Panc1 (cell line): ENCODE measurements at regions of chr1 and their contacts with region 1.

Region 1: GRCh38 chr1:47725992-47726855 is 271.0 kb downstream of the TRABD2B start:
- DNase-seq: peak; percentile 63
- ATAC-seq: peak; percentile 92
- H3K4me3 ChIP-seq: no peak overlapping the region
- H3K27ac ChIP-seq: no peak overlapping the region
- H3K4me1 ChIP-seq: peaks cover 15% of the 10 kb centered on the region; the same call in 1 of the 2 replicates
- H3K27me3 ChIP-seq: peaks cover 8% of the 10 kb centered on the region
- CTCF ChIP-seq: peak; percentile 92

Region 2: GRCh38 chr1:47340227-47340626 is 386.0 kb before region 1 on chr1:
- CTCF ChIA-PET with region 1: interaction called, 11 read pairs
- POLR2A ChIA-PET with region 1: no interaction called
- in situ Hi-C with region 1: no loop called
- intact Hi-C with region 1: no loop called
- DNase-seq: no peak
- ATAC-seq: no peak
- H3K4me3 ChIP-seq: no peak overlapping the region
- H3K27ac ChIP-seq: no peak overlapping the region
- H3K4me1 ChIP-seq: peaks cover 4% of the 10 kb centered on the region; the same call in 1 of the 2 replicates
- H3K27me3 ChIP-seq: no peaks in the 10 kb centered on the region
- CTCF ChIP-seq: no peak

Region 3: GRCh38 chr1:47388891-47389238 is 337.4 kb before region 1 on chr1:
- CTCF ChIA-PET with region 1: interaction called, 26 read pairs
- POLR2A ChIA-PET with region 1: no interaction called
- in situ Hi-C with region 1: no loop called
- intact Hi-C with region 1: loop called (anchors 5 kb)
- DNase-seq: peak; percentile 66
- ATAC-seq: peak; percentile 94
- H3K4me3 ChIP-seq: no peak overlapping the region
- H3K27ac ChIP-seq: no peak overlapping the region
- H3K4me1 ChIP-seq: no peaks in the 10 kb centered on the region; the same call in 1 of the 2 replicates
- H3K27me3 ChIP-seq: no peaks in the 10 kb centered on the region; the same call in 1 of the 2 replicates
- CTCF ChIP-seq: peak; percentile 94

Region 4: GRCh38 chr1:47432071-47433036 is 293.9 kb before region 1 on chr1:
- CTCF ChIA-PET with region 1: interaction called, 58 read pairs
- POLR2A ChIA-PET with region 1: no interaction called
- in situ Hi-C with region 1: no loop called
- intact Hi-C with region 1: loop called (anchors 1 kb)
- DNase-seq: no peak
- ATAC-seq: peak; percentile 76
- H3K4me3 ChIP-seq: no peak overlapping the region
- H3K27ac ChIP-seq: no peak overlapping the region
- H3K4me1 ChIP-seq: peaks cover 26% of the 10 kb centered on the region
- H3K27me3 ChIP-seq: no peaks in the 10 kb centered on the region
- CTCF ChIP-seq: peak; percentile 88

Region 5: DNA sequence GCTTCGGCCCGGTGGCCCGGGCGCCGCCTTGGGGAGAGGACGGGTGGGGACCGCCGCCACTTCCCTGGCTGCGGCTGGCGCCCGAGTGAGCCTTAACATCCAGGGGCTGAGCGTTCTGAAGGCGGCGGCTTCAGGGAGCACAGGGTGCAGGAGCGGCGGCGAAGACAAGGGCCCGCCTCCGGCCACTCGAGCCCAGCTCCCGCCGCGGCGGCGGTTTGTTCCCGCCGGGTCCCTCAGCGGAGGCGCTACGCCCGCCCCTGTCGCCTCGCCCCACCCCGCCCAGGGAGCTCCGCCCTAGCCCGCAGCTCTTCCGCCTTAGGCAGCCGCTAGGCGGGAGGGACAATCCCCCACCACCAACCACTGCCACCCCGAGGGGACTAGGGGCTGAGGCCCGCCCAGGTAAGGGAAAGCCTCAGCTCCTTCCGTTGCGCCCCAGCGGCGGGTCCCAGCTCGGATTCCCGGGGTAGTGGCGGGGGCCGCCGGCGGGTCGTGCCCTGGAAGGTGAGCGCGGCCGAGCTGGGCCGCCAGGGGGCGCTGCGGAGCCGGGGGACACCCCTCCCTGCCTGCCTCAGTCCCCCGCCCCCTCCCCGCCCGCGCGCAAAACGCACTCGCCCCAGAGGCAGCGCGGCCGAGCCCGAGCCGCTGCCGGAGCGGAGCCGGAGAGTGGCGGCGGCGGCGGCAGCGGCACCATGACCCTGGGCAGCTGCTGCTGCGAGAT is 288.6 kb before region 1 on chr1 and contains the start of gene FOXD2:
- CTCF ChIA-PET with region 1: interaction called, 58 read pairs
- POLR2A ChIA-PET with region 1: no interaction called
- in situ Hi-C with region 1: no loop called
- intact Hi-C with region 1: loop called (anchors 1 kb)
- DNase-seq: peak; percentile 57
- ATAC-seq: peak; percentile 93
- H3K4me3 ChIP-seq: peak within 1 kb of the TSS; percentile 63 to 89
- H3K27ac ChIP-seq: peak within 1 kb of the TSS; percentile 83
- H3K4me1 ChIP-seq: peaks cover 26% of the 10 kb centered on the region
- H3K27me3 ChIP-seq: no peaks in the 10 kb centered on the region
- CTCF ChIP-seq: peak; percentile 98
- total RNA-seq, gene FOXD2: 2.2 TPM

Region 6: DNA sequence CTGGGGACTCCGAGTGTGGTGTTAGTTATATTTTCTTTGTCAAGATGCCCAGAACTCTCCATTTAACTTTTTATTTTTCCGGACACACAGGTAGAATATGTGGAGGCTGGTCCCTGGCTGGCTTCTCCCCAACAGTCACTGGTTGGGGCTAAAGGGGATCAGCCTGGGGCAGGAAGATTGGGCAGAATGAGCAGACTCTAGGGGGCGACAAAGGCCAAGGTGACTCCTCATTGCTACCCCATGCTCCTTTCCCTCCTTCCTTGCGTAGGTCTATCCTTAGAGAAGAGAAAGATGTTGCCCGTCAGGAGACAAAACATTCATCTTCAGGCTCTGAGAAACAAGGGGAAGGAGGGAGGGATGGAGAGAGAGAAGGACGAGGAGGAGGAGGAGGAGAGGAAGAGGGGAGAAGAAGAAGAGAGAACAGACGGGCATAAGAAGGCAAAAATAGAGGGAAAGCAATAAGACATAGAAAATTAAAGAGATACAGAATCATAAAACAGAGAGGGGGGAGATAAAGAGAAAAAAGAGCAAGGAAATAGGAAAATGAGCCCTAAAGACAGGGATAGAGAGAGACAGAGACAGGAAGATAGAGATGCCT is 198.5 kb before region 1 on chr1:
- CTCF ChIA-PET with region 1: interaction called, 11 read pairs
- POLR2A ChIA-PET with region 1: no interaction called
- in situ Hi-C with region 1: no loop called
- intact Hi-C with region 1: loop called (anchors 5 kb)
- DNase-seq: no peak
- ATAC-seq: peak; percentile 86
- H3K4me3 ChIP-seq: no peak overlapping the region
- H3K27ac ChIP-seq: no peak overlapping the region
- H3K4me1 ChIP-seq: no peaks in the 10 kb centered on the region
- H3K27me3 ChIP-seq: peaks cover 2% of the 10 kb centered on the region; the same call in 1 of the 2 replicates
- CTCF ChIP-seq: peak; percentile 78

Region 7: GRCh38 chr1:47710329-47711071 is 15.7 kb before region 1 on chr1:
- CTCF ChIA-PET with region 1: interaction called, 10 read pairs
- POLR2A ChIA-PET with region 1: no interaction called
- in situ Hi-C with region 1: no loop called
- intact Hi-C with region 1: no loop called
- DNase-seq: peak; percentile 33
- ATAC-seq: peak; percentile 90
- H3K4me3 ChIP-seq: peak overlapping the region; percentile 44 to 56
- H3K27ac ChIP-seq: no peak overlapping the region; the same call in 1 of the 2 replicates
- H3K4me1 ChIP-seq: peaks cover 12% of the 10 kb centered on the region
- H3K27me3 ChIP-seq: peaks cover 2% of the 10 kb centered on the region
- CTCF ChIP-seq: peak; percentile 99